ENCODE measurements at regions of chr7 and their contacts with region 1.

Region 1: GRCh38 chr7:435630-436366 is 83.8 kb downstream of the PDGFA start:
- DNase-seq: peak in 1 of 2 experiments; percentile 34
- H3K4me3 ChIP-seq: no peak overlapping the region
- H3K4me3 Mint-ChIP-seq: peak overlapping the region; percentile 66
- H3K27ac Mint-ChIP-seq: peak overlapping the region; percentile 90
- H3K4me1 ChIP-seq: peaks cover 40% of the 10 kb centered on the region
- H3K4me1 Mint-ChIP-seq: peaks cover 20% of the 10 kb centered on the region
- H3K27me3 ChIP-seq: no peaks in the 10 kb centered on the region
- H3K27me3 Mint-ChIP-seq: no peaks in the 10 kb centered on the region
- CTCF ChIP-seq: no peak

Region 2: DNA sequence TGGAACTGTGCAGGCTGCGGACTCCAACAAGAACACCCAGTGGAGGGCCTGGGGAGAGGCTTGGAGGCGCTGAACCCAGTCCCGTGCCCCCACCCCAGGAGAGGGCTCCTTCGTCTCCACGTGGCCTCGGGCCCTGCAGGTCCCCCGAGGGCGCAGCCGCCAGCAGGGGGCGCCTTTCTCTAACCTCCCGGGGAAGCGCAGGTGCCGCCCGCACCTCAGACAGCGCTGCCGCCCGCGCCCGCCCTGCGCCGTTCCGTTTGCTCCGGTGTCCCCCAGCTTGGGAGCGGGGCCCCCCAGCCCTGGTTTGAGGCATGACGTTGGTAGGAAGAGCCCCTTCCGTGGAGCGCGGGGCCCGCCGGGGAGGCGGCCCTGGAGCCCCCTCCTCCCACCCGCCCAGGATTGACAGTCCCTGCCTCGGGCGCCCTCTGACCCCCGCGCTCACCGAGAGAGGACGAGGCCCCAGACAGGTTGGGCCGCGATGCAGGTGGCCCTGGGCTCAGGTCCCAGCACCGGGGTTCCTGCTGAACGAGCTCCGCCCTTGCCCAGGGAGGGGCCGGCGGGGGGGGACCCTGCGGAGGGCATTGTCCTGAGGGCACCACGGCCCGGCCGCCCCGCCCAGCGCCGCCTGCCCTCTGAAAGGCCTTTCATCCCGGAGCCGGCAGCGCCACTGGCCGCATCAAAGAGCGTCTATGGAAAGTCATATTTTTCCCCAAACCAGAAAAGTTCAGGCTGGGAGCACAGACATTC is 103.0 kb before region 1 on chr7:
- CTCF ChIA-PET with region 1: interaction called, 7 read pairs
- POLR2A ChIA-PET with region 1: interaction called, 8 read pairs
- intact Hi-C with region 1: loop called (anchors 1 kb)
- DNase-seq: peak; percentile 88 to 96
- H3K4me3 ChIP-seq: peak overlapping the region; percentile 46
- H3K4me3 Mint-ChIP-seq: peak overlapping the region; percentile 67
- H3K27ac Mint-ChIP-seq: peak overlapping the region; percentile 72
- H3K4me1 ChIP-seq: peaks cover 30% of the 10 kb centered on the region
- H3K4me1 Mint-ChIP-seq: peaks cover 35% of the 10 kb centered on the region
- H3K27me3 ChIP-seq: no peaks in the 10 kb centered on the region
- H3K27me3 Mint-ChIP-seq: no peaks in the 10 kb centered on the region
- CTCF ChIP-seq: peak; percentile 94 to 95

Region 3: GRCh38 chr7:371119-371778 is 64.5 kb before region 1 on chr7:
- CTCF ChIA-PET with region 1: interaction called, 3 read pairs
- POLR2A ChIA-PET with region 1: interaction called, 4 read pairs
- intact Hi-C with region 1: loop called (anchors 1 kb)
- DNase-seq: peak; percentile 59 to 84
- H3K4me3 ChIP-seq: no peak overlapping the region
- H3K4me3 Mint-ChIP-seq: peak overlapping the region; percentile 16
- H3K27ac Mint-ChIP-seq: peak overlapping the region; percentile 99
- H3K4me1 ChIP-seq: peaks cover 72% of the 10 kb centered on the region
- H3K4me1 Mint-ChIP-seq: peaks cover 43% of the 10 kb centered on the region
- H3K27me3 ChIP-seq: no peaks in the 10 kb centered on the region
- H3K27me3 Mint-ChIP-seq: no peaks in the 10 kb centered on the region
- CTCF ChIP-seq: no peak

Region 4: DNA sequence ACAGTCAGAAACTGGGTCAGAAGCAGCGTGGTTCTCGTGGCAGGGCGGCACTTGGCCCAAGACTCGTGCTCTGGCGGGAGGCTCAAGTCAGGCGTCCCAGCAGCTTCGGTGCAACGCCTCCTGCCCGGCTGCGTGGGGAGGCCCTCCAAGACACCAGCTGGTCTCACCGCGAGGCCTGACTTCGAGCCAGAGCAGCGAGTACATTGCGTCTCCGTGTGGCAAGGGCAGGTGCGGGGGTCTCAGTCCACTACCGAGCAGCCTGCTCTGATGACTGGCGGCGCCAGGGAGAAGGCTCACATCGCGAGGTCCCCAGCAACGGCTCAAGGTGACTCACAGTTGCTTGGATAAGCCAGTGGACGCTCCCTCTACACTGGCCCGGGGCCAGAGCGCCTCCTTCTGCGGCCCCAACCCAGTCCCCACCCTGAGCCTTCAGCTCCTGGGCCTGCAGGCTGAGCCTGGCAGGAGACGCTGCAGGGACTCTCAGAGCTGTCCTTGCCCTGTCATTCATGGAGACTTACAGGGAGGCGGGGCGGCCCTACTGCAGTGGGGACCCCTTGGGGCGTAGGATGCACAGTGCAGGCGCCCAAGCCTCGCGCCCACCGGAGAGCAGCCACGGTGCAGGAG is 333.2 kb after region 1 on chr7:
- CTCF ChIA-PET with region 1: no interaction called
- POLR2A ChIA-PET with region 1: no interaction called
- intact Hi-C with region 1: loop called (anchors 10 kb)
- DNase-seq: peak in 1 of 2 experiments; percentile 19
- H3K4me3 ChIP-seq: no peak overlapping the region
- H3K4me3 Mint-ChIP-seq: no peak overlapping the region
- H3K27ac Mint-ChIP-seq: peak overlapping the region; percentile 39
- H3K4me1 ChIP-seq: peaks cover 24% of the 10 kb centered on the region
- H3K4me1 Mint-ChIP-seq: peaks cover 7% of the 10 kb centered on the region
- H3K27me3 ChIP-seq: no peaks in the 10 kb centered on the region
- H3K27me3 Mint-ChIP-seq: no peaks in the 10 kb centered on the region
- CTCF ChIP-seq: no peak

Region 5: GRCh38 chr7:876167-876967 is 440.6 kb after region 1 on chr7 and contains the start of gene GET4:
- CTCF ChIA-PET with region 1: no interaction called
- POLR2A ChIA-PET with region 1: no interaction called
- intact Hi-C with region 1: no loop called
- DNase-seq: peak; percentile 98 to 99
- H3K4me3 ChIP-seq: peak within 1 kb of the TSS; percentile 97
- H3K4me3 Mint-ChIP-seq: peak within 1 kb of the TSS; percentile 100
- H3K27ac Mint-ChIP-seq: peak within 1 kb of the TSS; percentile 95
- H3K4me1 ChIP-seq: peaks cover 35% of the 10 kb centered on the region
- H3K4me1 Mint-ChIP-seq: peaks cover 9% of the 10 kb centered on the region
- H3K27me3 ChIP-seq: no peaks in the 10 kb centered on the region
- H3K27me3 Mint-ChIP-seq: no peaks in the 10 kb centered on the region
- CTCF ChIP-seq: peak; percentile 9 to 19
- total RNA-seq, gene GET4: 124 and 130 TPM in 2 replicates